Activated B cell treated with CpG ODN at 0.5 μM for 24 hours (primary cell): ENCODE measurements at regions of chr6 and their contacts with region 1.

Region 1: DNA sequence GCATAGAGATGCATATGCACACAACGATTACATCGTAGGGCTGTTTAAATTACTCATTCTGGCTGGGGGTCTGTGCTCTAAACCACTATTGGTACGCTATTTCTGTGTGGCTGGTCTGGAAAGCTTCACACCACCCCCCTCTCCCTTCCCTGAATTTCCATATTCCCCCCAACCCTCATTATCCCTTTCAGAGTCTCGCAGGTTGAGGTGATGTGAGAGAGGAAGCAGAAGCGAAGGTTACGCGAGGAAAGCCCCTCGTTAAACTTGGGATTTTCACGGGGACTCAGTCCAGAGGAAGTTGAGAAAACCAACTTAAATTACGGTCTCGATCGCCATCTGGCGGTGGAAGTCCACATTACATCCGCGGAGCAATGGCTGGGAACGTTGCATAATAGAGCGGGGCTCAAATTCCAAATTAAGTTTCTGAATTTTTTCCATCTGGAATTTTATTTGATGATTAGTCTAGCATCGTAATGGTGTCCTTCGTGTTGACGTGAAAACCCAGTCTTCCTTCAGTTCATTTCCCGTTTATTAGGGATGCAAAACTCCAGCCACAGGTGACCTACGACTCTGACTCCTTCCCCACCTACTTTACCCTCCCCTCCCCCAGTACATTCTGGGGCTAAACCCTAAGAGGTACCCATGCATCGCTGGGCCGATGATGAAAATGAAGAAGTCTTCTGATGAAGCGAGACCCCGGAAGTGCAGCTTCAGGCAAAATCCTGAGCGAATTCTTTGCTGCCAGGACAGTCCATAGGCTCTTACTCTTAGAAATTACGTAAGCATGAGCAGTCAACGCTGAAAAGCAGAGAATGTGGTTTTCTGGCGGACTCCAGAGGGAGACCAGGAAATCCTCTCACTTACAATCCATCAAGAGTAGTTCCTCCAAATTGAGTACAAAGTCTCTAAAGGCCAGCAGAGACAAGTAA is 19.7 kb downstream of the HLA-DOB start:
- DNase-seq: peak; percentile 82
- ATAC-seq: peak; percentile 87
- H3K4me3 Mint-ChIP-seq: peak overlapping the region; percentile 82
- H3K27ac Mint-ChIP-seq: peak overlapping the region; percentile 95
- H3K4me1 Mint-ChIP-seq: peaks cover 40% of the 10 kb centered on the region
- H3K27me3 Mint-ChIP-seq: no peaks in the 10 kb centered on the region
- CTCF ChIP-seq: peak; percentile 91

Region 2: DNA sequence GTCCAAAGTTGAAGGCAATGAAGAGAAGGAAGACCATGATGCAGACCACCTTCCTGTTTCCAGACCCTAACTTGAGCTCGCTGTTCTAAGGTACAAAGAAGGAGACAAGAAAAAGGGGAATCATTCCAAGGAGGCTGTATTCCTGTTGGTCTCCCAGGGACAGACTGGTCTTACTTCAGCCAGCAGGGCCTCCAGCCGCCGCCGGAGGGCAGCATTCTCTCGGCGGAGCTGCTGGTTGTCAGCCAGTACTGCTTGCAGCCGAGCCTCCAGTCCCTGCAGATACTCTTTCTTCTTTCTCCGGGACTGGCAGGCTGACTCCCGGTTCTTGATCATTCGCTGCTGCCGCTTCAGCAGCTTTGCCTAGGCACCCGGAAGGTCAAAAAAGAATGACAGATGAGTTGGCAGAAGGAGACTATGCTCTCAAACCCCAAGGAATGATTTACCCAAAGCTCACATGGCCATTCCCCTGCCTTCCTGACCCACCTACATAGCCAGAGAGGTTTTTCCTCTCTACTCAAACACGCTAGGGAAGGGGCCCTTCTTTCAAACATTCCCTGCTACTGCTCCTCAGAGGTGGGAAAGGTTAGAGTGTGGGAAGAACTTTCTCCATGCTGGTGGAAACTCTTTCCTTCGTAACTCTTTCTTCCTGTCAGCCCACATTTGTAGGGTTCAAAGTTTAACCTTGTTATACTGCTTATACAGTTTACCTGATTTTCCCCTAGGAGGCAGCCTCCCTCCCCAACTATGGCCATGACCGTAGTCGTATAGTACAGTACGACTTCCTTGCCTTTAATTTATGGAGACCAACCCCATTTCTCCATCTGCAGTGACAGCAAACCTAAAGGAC is 678.1 kb before region 1 on chr6:
- CTCF ChIA-PET with region 1: interaction called, 5 read pairs
- POLR2A ChIA-PET with region 1: no interaction called
- intact Hi-C with region 1: loop called (anchors 1 kb)
- DNase-seq: peak; percentile 57
- ATAC-seq: peak; percentile 94
- H3K4me3 Mint-ChIP-seq: no peak overlapping the region
- H3K27ac Mint-ChIP-seq: peak overlapping the region; percentile 56
- H3K4me1 Mint-ChIP-seq: peaks cover 8% of the 10 kb centered on the region
- H3K27me3 Mint-ChIP-seq: no peaks in the 10 kb centered on the region
- CTCF ChIP-seq: peak; percentile 57

Region 3: DNA sequence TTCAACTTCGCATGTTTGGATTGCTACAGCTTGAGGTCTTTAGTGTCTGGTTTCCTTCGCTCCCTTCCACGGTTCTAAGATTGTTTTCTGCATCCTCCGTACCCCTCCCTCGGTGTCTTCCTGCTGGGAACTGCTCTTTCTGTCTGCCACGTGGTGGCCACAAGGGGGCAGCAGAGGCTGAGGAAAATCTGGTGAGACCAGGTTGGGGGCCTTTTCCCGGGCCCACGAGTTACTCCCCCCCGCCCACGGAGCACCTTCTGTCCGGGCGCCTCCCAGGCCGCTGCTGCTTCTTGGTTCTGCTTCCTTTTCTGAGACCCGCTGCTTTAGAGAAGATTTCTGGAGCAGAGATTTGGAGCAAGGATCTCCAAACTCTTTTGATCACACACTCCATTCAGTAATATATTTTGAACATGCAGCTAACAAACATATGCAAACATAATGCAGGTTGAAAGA is 552.1 kb before region 1 on chr6:
- CTCF ChIA-PET with region 1: interaction called, 4 read pairs
- POLR2A ChIA-PET with region 1: no interaction called
- intact Hi-C with region 1: loop called (anchors 1 kb)
- DNase-seq: peak; percentile 77
- ATAC-seq: peak; percentile 91
- H3K4me3 Mint-ChIP-seq: peak overlapping the region; percentile 81
- H3K27ac Mint-ChIP-seq: peak overlapping the region; percentile 50
- H3K4me1 Mint-ChIP-seq: peaks cover 16% of the 10 kb centered on the region
- H3K27me3 Mint-ChIP-seq: no peaks in the 10 kb centered on the region
- CTCF ChIP-seq: no peak

Region 4: DNA sequence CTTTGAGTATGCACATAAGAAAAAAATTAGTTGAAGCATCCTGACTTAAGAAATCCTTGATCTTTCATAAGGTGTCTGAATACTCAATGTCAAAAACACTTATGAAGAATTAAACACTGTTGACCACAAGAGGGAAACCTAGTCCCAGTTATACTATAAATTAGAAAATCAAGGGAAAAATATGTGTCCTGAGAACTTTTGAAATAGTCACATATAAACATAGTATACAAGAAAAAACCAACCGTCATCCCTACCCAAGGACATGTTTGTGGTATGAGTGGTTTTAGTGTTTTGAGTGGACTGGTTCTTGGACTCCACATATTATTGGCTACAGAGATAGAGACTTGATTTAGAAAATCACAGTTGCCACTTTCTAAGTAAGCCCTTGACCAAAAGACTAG is 365.1 kb before region 1 on chr6:
- CTCF ChIA-PET with region 1: interaction called, 12 read pairs
- POLR2A ChIA-PET with region 1: no interaction called
- intact Hi-C with region 1: loop called (anchors 1 kb)
- DNase-seq: no peak
- ATAC-seq: peak; percentile 43
- H3K4me3 Mint-ChIP-seq: no peak overlapping the region
- H3K27ac Mint-ChIP-seq: peak overlapping the region; percentile 24
- H3K4me1 Mint-ChIP-seq: peaks cover 33% of the 10 kb centered on the region
- H3K27me3 Mint-ChIP-seq: no peaks in the 10 kb centered on the region
- CTCF ChIP-seq: peak; percentile 65

Region 5: GRCh38 chr6:32609731-32610640 is 187.1 kb before region 1 on chr6:
- CTCF ChIA-PET with region 1: no interaction called
- POLR2A ChIA-PET with region 1: no interaction called
- intact Hi-C with region 1: no loop called
- DNase-seq: no peak
- ATAC-seq: peak; percentile 84
- H3K4me3 Mint-ChIP-seq: no peak overlapping the region
- H3K27ac Mint-ChIP-seq: no peak overlapping the region
- H3K4me1 Mint-ChIP-seq: peaks cover 56% of the 10 kb centered on the region
- H3K27me3 Mint-ChIP-seq: no peaks in the 10 kb centered on the region
- CTCF ChIP-seq: no peak

Region 6: GRCh38 chr6:32700391-32701040 is 96.6 kb before region 1 on chr6:
- CTCF ChIA-PET with region 1: interaction called, 7 read pairs
- POLR2A ChIA-PET with region 1: no interaction called
- intact Hi-C with region 1: loop called (anchors 1 kb)
- DNase-seq: no peak
- ATAC-seq: peak; percentile 80
- H3K4me3 Mint-ChIP-seq: peak overlapping the region; percentile 86
- H3K27ac Mint-ChIP-seq: peak overlapping the region; percentile 91
- H3K4me1 Mint-ChIP-seq: peaks cover 32% of the 10 kb centered on the region
- H3K27me3 Mint-ChIP-seq: no peaks in the 10 kb centered on the region
- CTCF ChIP-seq: peak; percentile 32

Region 7: DNA sequence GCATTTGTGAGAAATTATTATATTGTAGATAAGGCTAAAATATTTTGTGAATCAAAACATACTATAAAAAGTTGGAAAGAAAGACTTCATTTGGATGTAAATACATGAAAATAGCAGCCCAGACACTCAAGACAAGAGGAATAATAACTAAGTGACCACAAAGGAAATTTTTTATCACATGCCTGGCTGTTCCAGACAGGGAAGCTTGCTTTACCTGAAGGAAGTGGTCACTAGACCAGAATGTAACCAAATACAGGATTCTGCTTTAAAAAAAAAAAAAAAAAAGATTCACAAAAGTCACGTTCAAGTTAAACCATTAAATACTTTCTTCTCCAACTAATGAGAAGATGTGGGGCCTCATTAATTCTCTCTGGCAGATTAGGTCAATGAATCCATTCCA is 24.5 kb before region 1 on chr6:
- CTCF ChIA-PET with region 1: no interaction called
- POLR2A ChIA-PET with region 1: no interaction called
- intact Hi-C with region 1: no loop called
- DNase-seq: no peak
- ATAC-seq: no peak
- H3K4me3 Mint-ChIP-seq: no peak overlapping the region
- H3K27ac Mint-ChIP-seq: no peak overlapping the region
- H3K4me1 Mint-ChIP-seq: peaks cover 7% of the 10 kb centered on the region
- H3K27me3 Mint-ChIP-seq: peaks cover 6% of the 10 kb centered on the region
- CTCF ChIP-seq: no peak

Region 8: DNA sequence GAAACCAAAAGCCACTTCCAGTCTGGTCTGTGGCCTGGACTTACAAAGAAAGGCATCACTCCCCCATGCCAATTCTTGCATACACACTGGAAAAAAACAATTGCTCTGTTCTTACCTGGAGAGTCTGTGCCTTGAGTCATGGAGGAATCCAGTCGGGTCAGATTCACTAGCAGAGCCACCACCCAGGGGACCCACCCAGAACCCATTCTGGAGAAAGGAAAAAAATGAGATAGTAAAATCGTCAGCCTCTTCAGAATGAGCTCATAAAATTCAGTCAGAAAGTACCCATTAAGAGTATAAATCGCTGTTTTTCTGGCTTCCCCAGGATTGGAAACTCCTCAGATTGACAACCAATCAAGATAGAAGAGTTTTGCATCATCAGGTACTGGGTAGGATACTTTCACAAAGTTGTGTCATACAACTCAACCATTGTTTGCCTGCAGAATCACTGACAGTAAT is 19.7 kb after region 1 on chr6 and contains the start of gene HLA-DOB:
- CTCF ChIA-PET with region 1: interaction called, 6 read pairs
- POLR2A ChIA-PET with region 1: interaction called, 4 read pairs
- intact Hi-C with region 1: loop called (anchors 1 kb)
- DNase-seq: no peak
- ATAC-seq: peak; percentile 73
- H3K4me3 Mint-ChIP-seq: peak within 1 kb of the TSS; percentile 99
- H3K27ac Mint-ChIP-seq: peak within 1 kb of the TSS; percentile 99
- H3K4me1 Mint-ChIP-seq: peaks cover 96% of the 10 kb centered on the region
- H3K27me3 Mint-ChIP-seq: no peaks in the 10 kb centered on the region
- CTCF ChIP-seq: no peak
- total RNA-seq, gene HLA-DOB: 95.6 and 101 TPM in 2 replicates

Region 9: DNA sequence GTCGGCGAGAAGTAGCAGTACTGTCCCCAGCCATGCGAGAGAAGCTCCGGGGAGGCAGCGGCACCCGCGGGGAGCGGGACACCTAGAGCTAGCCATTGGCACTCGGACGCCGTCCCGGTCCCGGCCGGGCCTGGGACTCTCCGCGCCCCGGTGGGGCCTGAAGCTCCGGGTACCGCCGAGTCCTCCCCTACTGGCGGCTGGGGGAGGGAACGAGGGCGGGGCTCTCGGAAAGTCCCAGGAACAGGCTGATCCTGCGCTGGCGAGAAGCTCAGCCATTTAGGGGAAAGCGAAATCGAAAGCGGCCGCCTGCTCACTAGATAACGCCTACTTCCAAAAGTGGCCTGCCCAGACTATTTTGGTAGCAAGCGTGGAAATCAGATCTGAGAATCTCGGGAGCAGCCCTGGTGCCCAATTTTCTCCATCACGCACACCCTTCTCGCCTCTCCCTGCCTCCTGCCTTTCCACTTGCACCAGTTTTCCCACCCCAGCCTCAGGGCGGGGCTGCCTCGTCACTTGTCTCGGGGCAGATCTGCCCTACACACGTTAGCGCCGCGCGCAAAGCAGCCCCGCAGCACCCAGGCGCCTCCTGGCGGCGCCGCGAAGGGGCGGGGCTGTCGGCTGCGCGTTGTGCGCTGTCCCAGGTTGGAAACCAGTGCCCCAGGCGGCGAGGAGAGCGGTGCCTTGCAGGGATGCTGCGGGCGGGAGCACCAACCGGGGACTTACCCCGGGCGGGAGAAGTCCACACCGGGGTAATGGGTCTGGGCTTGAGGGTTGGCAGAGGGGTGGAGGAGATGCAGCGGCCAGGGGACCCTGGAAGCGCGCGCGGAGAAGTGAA is 56.6 kb after region 1 on chr6 and contains the starts of genes PSMB9 and TAP1:
- CTCF ChIA-PET with region 1: interaction called, 11 read pairs
- POLR2A ChIA-PET with region 1: interaction called, 14 read pairs
- intact Hi-C with region 1: no loop called
- DNase-seq: peak; percentile 91
- ATAC-seq: peak; percentile 80
- H3K4me3 Mint-ChIP-seq: peak within 1 kb of the TSS; percentile 99
- H3K27ac Mint-ChIP-seq: peak within 1 kb of the TSS; percentile 98
- H3K4me1 Mint-ChIP-seq: peaks cover 77% of the 10 kb centered on the region
- H3K27me3 Mint-ChIP-seq: no peaks in the 10 kb centered on the region
- CTCF ChIP-seq: peak; percentile 20
- total RNA-seq, gene PSMB9: 198 and 223 TPM in 2 replicates
- total RNA-seq, gene TAP1: 148 and 151 TPM in 2 replicates